HEK293T (cell line): ENCODE measurements at regions of chr2 and their contacts with region 1.

Region 1: GRCh38 chr2:223993621-223994232 is 36.5 kb downstream of the MRPL44 start:
- DNase-seq: peak; percentile 76

Region 2: DNA sequence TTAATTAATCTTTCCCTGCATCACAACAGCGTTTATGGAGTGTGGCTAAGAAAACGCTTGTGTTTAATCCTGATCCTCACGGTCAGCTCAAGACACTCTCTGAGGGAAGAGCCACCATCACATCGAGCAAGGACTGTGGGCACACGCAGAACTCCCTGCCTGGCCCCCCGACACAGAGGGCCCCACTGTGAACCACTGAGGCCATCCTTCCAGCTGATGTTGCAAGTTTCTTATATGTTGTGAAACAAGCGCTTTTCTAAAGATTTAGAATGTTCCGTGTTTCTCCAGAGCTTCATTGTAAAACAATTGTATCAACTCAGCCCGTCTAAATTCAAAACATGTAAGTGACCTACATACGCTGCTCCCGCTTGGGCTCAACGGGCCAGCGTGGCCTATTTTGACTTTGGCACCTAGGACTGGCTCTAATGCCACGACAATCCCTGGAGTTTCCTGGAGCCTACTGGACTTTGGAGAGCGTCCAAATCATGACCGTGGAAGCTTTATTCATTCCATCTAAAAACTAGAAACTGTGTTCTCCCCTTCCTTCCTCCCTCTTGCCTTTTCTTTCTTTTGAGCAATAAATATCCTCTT is 10.5 kb after region 1 on chr2:
- CTCF ChIA-PET with region 1: interaction called, 13 read pairs
- POLR2A ChIA-PET with region 1: interaction called, 3 read pairs
- DNase-seq: no peak

Region 3: GRCh38 chr2:224031358-224031970 is 37.7 kb after region 1 on chr2:
- CTCF ChIA-PET with region 1: no interaction called
- POLR2A ChIA-PET with region 1: no interaction called
- DNase-seq: no peak

Region 4: DNA sequence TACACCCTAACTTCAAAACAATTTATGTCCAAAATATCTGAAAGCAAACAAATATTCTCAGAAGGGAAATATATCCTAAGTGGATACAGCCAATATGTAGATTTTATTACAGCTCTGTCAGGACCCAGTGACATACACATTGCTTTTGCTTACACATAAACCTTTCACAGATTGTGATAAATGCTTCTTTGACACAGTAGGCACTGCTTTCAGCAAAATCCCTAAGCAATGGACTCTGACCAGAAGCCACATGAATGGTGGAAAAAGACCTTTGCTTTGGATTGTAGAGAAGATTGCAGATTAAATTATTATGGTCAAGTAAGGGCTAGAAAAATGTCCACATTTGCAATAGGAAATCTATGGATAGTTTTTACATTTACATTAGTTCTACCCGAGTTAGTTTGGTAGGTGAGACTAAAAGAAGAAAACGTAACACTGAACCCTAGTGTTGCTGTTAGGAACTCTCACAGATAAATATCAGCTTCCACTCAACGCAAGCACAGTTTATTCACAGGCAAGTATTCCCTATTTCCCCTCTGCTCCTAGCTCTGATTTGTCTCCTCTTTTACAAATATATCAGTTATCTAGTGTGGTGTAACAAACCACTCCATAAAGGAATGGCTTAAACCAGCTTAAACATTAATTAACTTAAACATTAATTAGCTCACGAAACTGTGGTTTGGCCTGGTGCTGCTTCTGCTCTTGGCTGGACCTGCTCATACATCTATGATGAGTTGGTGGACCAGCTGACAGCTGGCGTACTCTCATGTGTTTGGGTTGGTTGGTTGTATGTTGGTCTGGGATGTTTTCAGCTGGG is 69.0 kb after region 1 on chr2:
- CTCF ChIA-PET with region 1: interaction called, 10 read pairs
- POLR2A ChIA-PET with region 1: no interaction called
- DNase-seq: no peak

Region 5: GRCh38 chr2:224284134-224284946 is 290.6 kb after region 1 on chr2:
- CTCF ChIA-PET with region 1: interaction called, 54 read pairs
- POLR2A ChIA-PET with region 1: no interaction called
- DNase-seq: peak; percentile 9